Activated CD4-positive, alpha-beta T cell treated with anti-CD3 and anti-CD28 coated beads, Interleukin-2, amount 10 ng/mL, durations not matched to agents 24 days and 14 days (primary cell): ENCODE measurements at regions of chr21 and their contacts with region 1.

Region 1: DNA sequence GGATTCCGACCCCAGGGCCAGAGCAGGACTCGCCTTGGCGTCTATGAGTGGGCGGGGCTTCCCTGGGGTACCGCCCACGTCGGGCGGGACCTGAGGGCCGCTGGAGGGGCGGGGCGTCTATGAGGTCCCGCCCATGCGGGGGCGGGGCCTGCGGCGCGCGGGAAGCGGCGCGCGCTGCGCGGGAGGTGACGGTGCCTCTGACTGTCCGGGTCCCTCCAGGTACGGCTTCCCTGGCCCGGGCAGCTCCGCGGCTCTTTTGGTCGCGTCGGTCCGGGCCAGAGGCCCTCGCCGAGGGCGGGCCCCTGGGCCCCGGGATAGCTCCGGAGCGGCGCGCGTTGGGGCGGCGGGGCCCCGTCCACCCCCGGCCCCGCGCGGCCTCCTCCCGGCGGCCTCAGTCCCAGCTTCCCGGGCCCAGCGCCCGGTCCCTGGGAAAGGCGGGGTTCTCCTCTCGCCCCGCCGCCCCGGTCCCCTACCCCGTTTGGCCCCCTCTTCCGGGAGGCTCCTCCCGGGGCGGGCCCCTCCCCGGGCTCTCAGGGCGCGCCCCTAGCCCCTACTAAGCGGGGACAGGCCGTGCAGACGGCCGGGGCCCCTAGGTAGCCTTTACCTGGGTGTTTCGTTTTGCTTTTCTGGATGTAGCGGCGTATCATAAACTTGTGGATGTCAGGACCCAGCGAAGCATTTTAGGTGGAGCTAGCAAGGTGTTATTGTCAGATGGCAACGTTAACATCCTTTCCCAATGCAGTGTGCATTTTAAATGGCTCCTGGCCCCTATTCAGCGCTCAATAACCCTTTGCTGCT is at the start of gene CHAF1B:
- DNase-seq: peak; percentile 96
- H3K4me3 Mint-ChIP-seq: peak within 1 kb of the TSS; percentile 84
- H3K27ac Mint-ChIP-seq: peak within 1 kb of the TSS; percentile 71
- H3K4me1 Mint-ChIP-seq: peaks cover 19% of the 10 kb centered on the region
- H3K27me3 Mint-ChIP-seq: no peaks in the 10 kb centered on the region
- total RNA-seq, gene CHAF1B: 33.4 and 36.5 TPM in 2 replicates

Region 2: GRCh38 chr21:36060159-36060921 is 325.1 kb before region 1 on chr21 and contains the start of gene SETD4:
- intact Hi-C with region 1: loop called (anchors 10 kb)
- DNase-seq: peak; percentile 98
- H3K4me3 Mint-ChIP-seq: peak within 1 kb of the TSS; percentile 94
- H3K27ac Mint-ChIP-seq: peak within 1 kb of the TSS; percentile 99
- H3K4me1 Mint-ChIP-seq: peaks cover 24% of the 10 kb centered on the region
- H3K27me3 Mint-ChIP-seq: peaks cover 1% of the 10 kb centered on the region
- total RNA-seq, gene SETD4: 23.2 and 23.8 TPM in 2 replicates

Region 3: GRCh38 chr21:36504067-36505058 is 118.9 kb after region 1 on chr21:
- intact Hi-C with region 1: no loop called
- DNase-seq: peak; percentile 83
- H3K4me3 Mint-ChIP-seq: no peak overlapping the region
- H3K27ac Mint-ChIP-seq: no peak overlapping the region
- H3K4me1 Mint-ChIP-seq: no peaks in the 10 kb centered on the region
- H3K27me3 Mint-ChIP-seq: peaks cover 5% of the 10 kb centered on the region